ENCODE measurements at regions of chr1 and their contacts with region 1.

Region 1: GRCh38 chr1:226634166-226634588 is 85.6 kb downstream of the STUM start:
- DNase-seq: peak; percentile 91
- ATAC-seq: peak; percentile 70
- H3K4me3 Mint-ChIP-seq: no peak overlapping the region
- H3K27ac Mint-ChIP-seq: peak overlapping the region; percentile 17
- H3K4me1 Mint-ChIP-seq: peaks cover 49% of the 10 kb centered on the region
- H3K27me3 Mint-ChIP-seq: no peaks in the 10 kb centered on the region

Region 2: GRCh38 chr1:226649780-226650179 is 15.6 kb after region 1 on chr1:
- CTCF ChIA-PET with region 1: interaction called, 11 read pairs
- POLR2A ChIA-PET with region 1: no interaction called
- intact Hi-C with region 1: no loop called
- DNase-seq: peak; percentile 67
- ATAC-seq: no peak
- H3K4me3 Mint-ChIP-seq: no peak overlapping the region
- H3K27ac Mint-ChIP-seq: peak overlapping the region; percentile 52
- H3K4me1 Mint-ChIP-seq: peaks cover 48% of the 10 kb centered on the region
- H3K27me3 Mint-ChIP-seq: no peaks in the 10 kb centered on the region

Measured in activated CD4-positive, alpha-beta T cell treated with anti-CD3 and anti-CD28 coated beads for 36 hours (primary cell).